Activated naive CD4-positive, alpha-beta T cell treated with anti-CD3 and anti-CD28 coated beads for 36 hours (primary cell): ENCODE measurements at regions of chr5 and their contacts with region 1.

Region 1: DNA sequence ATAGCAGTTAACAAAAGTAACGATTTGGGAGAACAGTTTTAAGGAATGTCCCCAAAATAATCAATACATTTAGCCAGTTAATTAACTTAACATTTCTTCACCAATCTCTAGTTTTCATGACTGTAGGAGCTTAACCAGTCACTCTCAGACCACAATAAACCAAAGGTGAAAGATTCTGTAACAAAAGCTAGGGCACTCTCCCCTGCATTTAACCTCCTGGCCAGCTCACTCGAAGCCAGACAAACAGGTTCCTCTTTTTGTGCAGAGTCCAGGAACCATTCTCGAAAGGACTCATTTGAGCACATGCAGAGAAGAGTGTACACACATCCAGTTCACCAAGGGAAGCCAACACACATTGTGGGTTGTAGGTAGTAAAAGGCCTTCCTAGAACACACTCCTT is 6.5 kb downstream of the IL7R start:
- DNase-seq: peak; percentile 50
- H3K4me3 Mint-ChIP-seq: peak overlapping the region; percentile 81
- H3K27ac Mint-ChIP-seq: peak overlapping the region; percentile 100
- H3K4me1 Mint-ChIP-seq: peaks cover 71% of the 10 kb centered on the region
- H3K27me3 Mint-ChIP-seq: no peaks in the 10 kb centered on the region

Region 2: GRCh38 chr5:35458824-35459207 is 404.3 kb before region 1 on chr5:
- CTCF ChIA-PET with region 1: no interaction called
- intact Hi-C with region 1: no loop called
- DNase-seq: no peak
- H3K4me3 Mint-ChIP-seq: no peak overlapping the region
- H3K27ac Mint-ChIP-seq: no peak overlapping the region
- H3K4me1 Mint-ChIP-seq: no peaks in the 10 kb centered on the region
- H3K27me3 Mint-ChIP-seq: peaks cover 5% of the 10 kb centered on the region

Region 3: DNA sequence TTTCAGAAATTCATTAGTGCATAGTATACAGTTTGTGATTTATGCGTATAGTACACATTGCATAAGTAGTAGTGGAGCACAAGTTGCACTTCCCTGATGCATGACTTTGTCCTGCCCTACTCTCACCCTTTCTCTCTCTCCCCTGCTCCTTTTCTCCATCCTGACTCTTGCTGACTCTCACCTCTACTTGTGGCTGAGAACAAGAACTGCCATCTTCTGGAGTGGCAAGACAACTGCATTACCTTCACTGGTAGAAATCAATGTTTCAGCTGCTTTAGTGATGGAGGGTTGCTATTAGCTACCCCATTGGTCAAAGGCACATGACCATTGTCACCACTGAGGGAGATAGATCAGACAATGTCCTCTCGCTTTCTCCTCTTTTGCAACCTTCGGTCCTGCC is 218.6 kb before region 1 on chr5:
- CTCF ChIA-PET with region 1: no interaction called
- intact Hi-C with region 1: no loop called
- DNase-seq: no peak
- H3K4me3 Mint-ChIP-seq: no peak overlapping the region
- H3K27ac Mint-ChIP-seq: no peak overlapping the region
- H3K4me1 Mint-ChIP-seq: no peaks in the 10 kb centered on the region
- H3K27me3 Mint-ChIP-seq: no peaks in the 10 kb centered on the region

Region 4: DNA sequence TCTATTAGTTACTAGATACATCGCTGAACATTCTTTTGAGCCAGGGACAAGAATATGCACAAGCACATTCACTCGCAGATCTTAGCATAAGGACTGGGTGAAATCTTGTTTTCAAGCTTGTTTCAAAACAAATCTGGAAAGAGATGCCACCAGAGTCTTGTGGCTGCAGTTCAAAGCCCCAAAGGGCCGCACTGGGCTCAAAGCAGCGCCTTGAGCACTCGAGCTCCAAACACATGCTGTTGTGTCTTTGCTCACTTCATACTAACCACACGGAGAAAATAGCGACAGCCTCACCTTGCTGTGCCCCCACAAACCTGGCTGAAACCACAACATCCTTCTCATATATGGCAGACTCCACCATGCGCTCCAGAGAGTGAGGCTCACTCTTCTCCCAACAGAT is 40.6 kb before region 1 on chr5:
- CTCF ChIA-PET with region 1: interaction called, 28 read pairs
- intact Hi-C with region 1: no loop called
- DNase-seq: peak; percentile 56
- H3K4me3 Mint-ChIP-seq: peak overlapping the region; percentile 30
- H3K27ac Mint-ChIP-seq: peak overlapping the region; percentile 95
- H3K4me1 Mint-ChIP-seq: peaks cover 87% of the 10 kb centered on the region
- H3K27me3 Mint-ChIP-seq: no peaks in the 10 kb centered on the region

Region 5: GRCh38 chr5:35884115-35884788 is 21.1 kb after region 1 on chr5:
- CTCF ChIA-PET with region 1: interaction called, 5 read pairs
- intact Hi-C with region 1: loop called (anchors 1 kb)
- DNase-seq: peak; percentile 60
- H3K4me3 Mint-ChIP-seq: peak overlapping the region; percentile 25
- H3K27ac Mint-ChIP-seq: peak overlapping the region; percentile 93
- H3K4me1 Mint-ChIP-seq: peaks cover 49% of the 10 kb centered on the region
- H3K27me3 Mint-ChIP-seq: no peaks in the 10 kb centered on the region

Region 6: GRCh38 chr5:35954175-35954574 is 91.0 kb after region 1 on chr5:
- CTCF ChIA-PET with region 1: no interaction called
- intact Hi-C with region 1: no loop called
- DNase-seq: peak; percentile 19
- H3K4me3 Mint-ChIP-seq: no peak overlapping the region
- H3K27ac Mint-ChIP-seq: no peak overlapping the region
- H3K4me1 Mint-ChIP-seq: peaks cover 2% of the 10 kb centered on the region
- H3K27me3 Mint-ChIP-seq: peaks cover 44% of the 10 kb centered on the region

Region 7: GRCh38 chr5:36478646-36479317 is 615.6 kb after region 1 on chr5:
- CTCF ChIA-PET with region 1: no interaction called
- intact Hi-C with region 1: no loop called
- DNase-seq: no peak
- H3K4me3 Mint-ChIP-seq: no peak overlapping the region
- H3K27ac Mint-ChIP-seq: no peak overlapping the region
- H3K4me1 Mint-ChIP-seq: no peaks in the 10 kb centered on the region
- H3K27me3 Mint-ChIP-seq: no peaks in the 10 kb centered on the region